H1 (cell line): ENCODE measurements at regions of chr17 and their contacts with region 1.

Region 1: GRCh38 chr17:66727639-66728570 is 107.0 kb upstream of the CACNG5 start:
- DNase-seq: peak; percentile 31 to 78
- H3K4me3 ChIP-seq: no peak overlapping the region
- H3K27ac ChIP-seq: no peak overlapping the region
- H3K4me1 ChIP-seq: peaks cover 9 to 26% (median 18%) of the 10 kb centered on the region in 4 experiments
- H3K27me3 ChIP-seq: no peaks in the 10 kb centered on the region
- CTCF ChIP-seq: peak; percentile 82 to 92 (median 88)
- EP300 ChIP-seq: no peak
- POLR2A ChIP-seq: no peak
- RAD21 ChIP-seq: peak; percentile 85 to 93

Region 2: GRCh38 chr17:66717641-66718058 is 10.3 kb before region 1 on chr17:
- CTCF ChIA-PET with region 1: interaction called, 37 read pairs
- POLR2A ChIA-PET with region 1: no interaction called
- DNase-seq: no peak
- H3K4me3 ChIP-seq: no peak overlapping the region
- H3K27ac ChIP-seq: no peak overlapping the region
- H3K4me1 ChIP-seq: peaks cover 9 to 29% (median 13%) of the 10 kb centered on the region in 4 experiments
- H3K27me3 ChIP-seq: no peaks in the 10 kb centered on the region
- CTCF ChIP-seq: no peak
- EP300 ChIP-seq: no peak
- POLR2A ChIP-seq: no peak
- RAD21 ChIP-seq: no peak

Region 3: DNA sequence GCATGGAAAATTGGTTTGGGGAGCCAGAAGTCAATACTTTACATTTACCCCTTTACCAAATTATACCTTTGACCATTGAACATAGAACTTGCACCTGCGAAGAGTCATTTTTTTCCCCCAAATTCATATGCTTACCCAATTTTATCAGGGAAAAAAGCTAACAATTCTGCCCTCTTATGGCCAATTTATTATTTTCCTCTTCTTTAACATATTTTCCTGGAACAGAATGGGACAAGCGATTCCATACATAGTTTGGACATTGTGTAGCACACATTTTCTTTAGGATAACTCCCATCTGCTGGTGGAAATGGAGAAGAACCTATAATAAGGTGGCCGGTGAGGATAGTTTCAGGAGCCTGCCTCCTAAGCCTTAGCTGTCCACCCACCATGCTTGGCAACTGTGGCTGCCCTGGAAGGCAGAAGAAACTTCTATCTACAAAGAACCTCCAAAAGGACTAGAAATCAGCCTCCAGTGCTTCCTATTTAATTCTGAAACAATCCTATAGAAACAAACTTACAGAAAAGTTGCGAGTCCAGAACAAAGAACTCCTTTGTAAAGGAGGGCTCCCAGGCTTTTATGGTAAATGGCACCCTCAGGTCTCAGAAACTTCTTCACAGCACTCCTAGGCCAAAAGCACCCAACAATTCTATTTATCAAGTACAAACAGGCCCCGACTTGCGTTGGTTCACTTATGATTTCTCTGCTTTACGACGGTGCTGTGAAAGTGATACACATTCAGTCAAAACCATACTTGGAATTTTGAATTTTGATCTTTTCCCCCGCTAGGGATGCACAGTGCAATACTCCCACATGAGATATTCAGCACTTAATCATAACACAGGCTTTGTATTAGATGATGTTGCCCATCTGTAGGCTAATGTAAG is 172.5 kb after region 1 on chr17:
- CTCF ChIA-PET with region 1: interaction called, 59 read pairs
- POLR2A ChIA-PET with region 1: no interaction called
- DNase-seq: no peak
- H3K4me3 ChIP-seq: no peak overlapping the region
- H3K27ac ChIP-seq: no peak overlapping the region
- H3K4me1 ChIP-seq: no peaks in the 10 kb centered on the region
- H3K27me3 ChIP-seq: no peaks in the 10 kb centered on the region
- CTCF ChIP-seq: peak in 1 of 3 experiments; percentile 5; a peak in 1 of 4 replicates
- EP300 ChIP-seq: no peak
- POLR2A ChIP-seq: no peak
- RAD21 ChIP-seq: peak in 1 of 2 experiments; percentile 33; a peak in 1 of 4 replicates